MCF 10A (cell line): ENCODE measurements at regions of chr6 and their contacts with region 1.

Region 1: DNA sequence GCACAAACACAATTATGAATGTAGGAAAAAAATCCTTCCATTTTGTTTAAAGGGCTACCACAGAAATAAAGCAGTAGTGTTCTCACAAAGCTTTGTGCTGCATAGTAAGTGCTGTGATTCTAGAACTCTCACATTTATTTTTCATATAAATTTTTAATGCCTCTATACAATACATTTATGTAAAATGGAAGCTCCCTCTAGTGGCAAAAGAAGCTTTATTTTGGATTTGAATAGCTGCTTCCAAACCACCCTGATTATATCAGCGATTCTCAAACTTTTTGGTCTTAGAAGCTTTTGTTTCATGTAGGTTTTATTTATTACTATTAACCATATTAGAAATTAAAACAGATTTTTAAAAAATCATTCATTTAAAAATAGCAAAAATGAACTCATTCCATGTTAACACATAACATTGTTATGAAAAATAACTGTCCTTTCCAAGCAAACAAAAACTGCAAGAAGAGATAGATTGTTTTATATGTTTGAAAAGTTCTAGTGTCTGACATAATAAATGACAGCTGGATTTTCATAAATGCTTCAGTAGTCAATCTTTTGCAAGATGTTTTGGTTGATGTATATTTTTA is 38.4 kb downstream of the HS3ST5 start:
- DNase-seq: peak; percentile 27
- H3K4me3 Mint-ChIP-seq: no peak overlapping the region
- H3K27ac Mint-ChIP-seq: no peak overlapping the region
- H3K4me1 Mint-ChIP-seq: no peaks in the 10 kb centered on the region
- H3K27me3 Mint-ChIP-seq: peaks cover 51% of the 10 kb centered on the region
- CTCF ChIP-seq: peak; percentile 25

Region 2: DNA sequence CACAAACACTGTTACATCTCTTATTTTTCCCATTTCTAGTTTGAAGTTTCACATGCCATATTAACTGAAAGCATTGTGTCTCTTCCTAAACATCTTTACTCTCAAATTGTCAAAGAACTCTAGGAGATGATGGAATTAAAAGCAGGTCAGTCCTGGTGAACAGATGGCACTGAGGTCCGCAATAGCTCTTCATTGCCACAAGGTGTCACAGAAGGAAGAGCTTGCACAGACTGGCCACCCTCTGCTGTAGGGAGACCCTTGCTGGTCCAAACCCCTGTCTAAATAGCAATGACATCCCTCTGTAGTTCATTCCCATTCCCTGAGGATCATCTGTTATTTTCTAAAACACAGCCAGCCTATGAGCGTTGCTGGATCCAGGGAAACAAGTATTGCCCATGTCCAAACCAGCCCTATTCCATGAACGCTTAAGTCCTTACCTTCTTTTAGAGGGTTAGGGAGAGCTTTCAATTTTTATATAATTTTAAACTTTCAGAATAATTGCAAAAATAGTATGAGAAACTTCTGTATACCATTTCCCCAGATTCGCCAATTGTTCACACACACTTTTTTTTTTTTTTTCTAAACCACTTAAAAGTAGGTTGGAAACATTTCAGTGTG is 323.4 kb before region 1 on chr6:
- CTCF ChIA-PET with region 1: interaction called, 13 read pairs
- POLR2A ChIA-PET with region 1: no interaction called
- intact Hi-C with region 1: no loop called
- DNase-seq: peak; percentile 25
- H3K4me3 Mint-ChIP-seq: no peak overlapping the region
- H3K27ac Mint-ChIP-seq: no peak overlapping the region
- H3K4me1 Mint-ChIP-seq: no peaks in the 10 kb centered on the region
- H3K27me3 Mint-ChIP-seq: no peaks in the 10 kb centered on the region
- CTCF ChIP-seq: peak; percentile 49

Region 3: GRCh38 chr6:114096561-114097172 is 207.7 kb before region 1 on chr6:
- CTCF ChIA-PET with region 1: interaction called, 5 read pairs
- POLR2A ChIA-PET with region 1: no interaction called
- intact Hi-C with region 1: loop called (anchors 2 kb)
- DNase-seq: peak; percentile 51
- H3K4me3 Mint-ChIP-seq: no peak overlapping the region
- H3K27ac Mint-ChIP-seq: no peak overlapping the region
- H3K4me1 Mint-ChIP-seq: no peaks in the 10 kb centered on the region
- H3K27me3 Mint-ChIP-seq: no peaks in the 10 kb centered on the region
- CTCF ChIP-seq: peak; percentile 37

Region 4: DNA sequence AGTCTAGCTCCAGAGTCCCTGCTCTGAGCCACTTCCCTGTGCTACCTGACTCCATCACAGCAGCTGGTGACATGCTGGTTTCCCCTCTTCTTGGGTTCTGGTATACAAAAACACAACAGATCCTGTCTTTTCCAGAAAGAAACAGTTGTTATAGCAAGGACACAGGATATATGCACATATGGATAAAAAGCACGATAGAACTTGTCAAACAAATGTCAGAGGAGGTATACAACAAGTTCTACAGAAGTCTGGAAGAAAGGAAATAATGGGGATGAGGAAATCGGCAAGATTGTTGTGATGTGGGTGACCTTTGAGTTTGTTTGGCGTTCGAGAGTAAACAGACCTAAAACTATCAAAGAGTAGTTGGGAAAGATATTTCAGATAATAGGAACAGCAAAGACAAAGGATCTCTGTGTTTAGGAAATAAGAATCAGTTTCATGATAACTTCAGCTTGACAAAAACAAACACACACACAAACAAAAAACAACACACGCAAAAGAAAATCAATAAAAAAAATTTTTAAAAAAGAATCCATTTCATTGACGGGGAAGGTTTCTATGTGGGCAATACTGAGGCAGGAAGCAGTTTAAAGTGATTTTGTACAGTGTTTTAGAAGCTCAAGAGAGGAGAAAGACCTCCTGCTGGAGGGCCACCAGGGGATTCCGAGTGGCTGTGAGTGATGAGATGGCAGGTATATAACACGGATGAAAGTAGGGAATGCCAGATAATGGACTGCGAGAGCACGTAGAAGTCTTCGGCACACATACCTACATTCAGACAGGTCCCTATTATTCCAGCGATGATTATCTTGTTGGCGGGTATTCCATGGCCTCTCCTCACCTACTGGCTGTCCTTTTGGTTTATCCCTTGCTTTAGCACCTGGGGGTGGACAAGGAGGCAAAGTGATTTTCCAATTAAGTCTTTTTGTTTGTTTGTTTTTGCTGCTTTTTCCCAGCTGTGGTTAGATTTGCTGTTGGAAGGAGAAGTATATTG is 136.5 kb before region 1 on chr6:
- CTCF ChIA-PET with region 1: no interaction called
- POLR2A ChIA-PET with region 1: no interaction called
- intact Hi-C with region 1: no loop called
- DNase-seq: no peak
- H3K4me3 Mint-ChIP-seq: no peak overlapping the region
- H3K27ac Mint-ChIP-seq: no peak overlapping the region
- H3K4me1 Mint-ChIP-seq: no peaks in the 10 kb centered on the region
- H3K27me3 Mint-ChIP-seq: peaks cover 56% of the 10 kb centered on the region
- CTCF ChIP-seq: no peak

Region 5: GRCh38 chr6:114288701-114289495 is 15.5 kb before region 1 on chr6:
- CTCF ChIA-PET with region 1: interaction called, 17 read pairs
- POLR2A ChIA-PET with region 1: no interaction called
- intact Hi-C with region 1: no loop called
- DNase-seq: no peak
- H3K4me3 Mint-ChIP-seq: no peak overlapping the region
- H3K27ac Mint-ChIP-seq: no peak overlapping the region
- H3K4me1 Mint-ChIP-seq: no peaks in the 10 kb centered on the region
- H3K27me3 Mint-ChIP-seq: peaks cover 58% of the 10 kb centered on the region
- CTCF ChIP-seq: no peak